ENCODE measurements at regions of chr16 and their contacts with region 1.

Region 1: DNA sequence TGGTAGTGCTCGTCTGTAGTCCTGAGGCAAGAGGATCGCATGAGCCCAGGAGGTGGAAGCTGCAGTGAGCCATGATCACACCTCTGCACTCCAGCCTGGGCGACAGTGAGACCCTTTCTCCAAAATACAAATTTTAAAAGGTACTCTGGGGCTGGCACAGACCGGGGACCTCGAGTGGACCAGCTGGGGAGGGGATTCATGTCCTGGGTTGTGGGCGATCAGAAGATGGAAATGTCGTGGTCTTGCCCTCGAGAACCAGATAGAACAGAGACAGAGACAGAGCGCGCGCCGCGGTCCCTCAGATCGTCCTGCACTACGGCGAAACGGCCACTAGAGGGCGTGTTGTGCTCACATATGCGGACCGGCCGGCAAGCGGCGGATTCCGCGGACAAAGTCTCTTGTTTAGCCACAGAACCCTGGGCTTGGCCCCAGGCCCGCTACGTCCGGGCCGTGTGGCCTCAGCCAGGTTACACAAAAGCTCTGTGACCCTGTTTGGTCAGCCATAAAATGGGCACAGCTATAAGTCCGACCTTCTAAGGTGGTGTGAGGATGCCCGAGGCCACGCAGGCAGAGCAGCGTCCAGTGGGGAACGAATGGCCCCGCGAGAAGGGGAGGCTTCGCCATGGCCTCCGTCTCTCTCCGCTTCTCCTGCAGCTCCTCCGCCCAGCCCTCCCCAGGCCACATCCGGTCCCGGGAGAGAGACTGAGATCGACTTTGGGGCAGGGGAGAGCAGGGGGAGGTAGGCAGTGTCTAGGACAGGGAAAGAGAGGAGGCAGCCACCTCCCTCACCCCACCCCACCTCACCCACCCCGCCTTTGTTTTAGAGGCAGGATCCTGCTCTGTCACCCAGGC is 14.6 kb upstream of the SBK1 start:
- DNase-seq: peak; percentile 85 to 96 (median 93)
- ATAC-seq: peak; percentile 89 to 93
- H3K4me3 ChIP-seq: peak overlapping the region; percentile 14
- H3K27ac ChIP-seq: no peak overlapping the region
- H3K4me1 ChIP-seq: no peaks in the 10 kb centered on the region
- H3K27me3 ChIP-seq: no peaks in the 10 kb centered on the region

Region 2: GRCh38 chr16:28317040-28317880 is 39.5 kb after region 1 on chr16:
- intact Hi-C with region 1: loop called in 2 of 4 experiments (anchors 1 to 5 kb)
- DNase-seq: peak; percentile 53 to 78 (median 72)
- ATAC-seq: peak; percentile 30 to 55
- H3K4me3 ChIP-seq: no peak overlapping the region
- H3K27ac ChIP-seq: no peak overlapping the region
- H3K4me1 ChIP-seq: no peaks in the 10 kb centered on the region
- H3K27me3 ChIP-seq: no peaks in the 10 kb centered on the region

Region 3: GRCh38 chr16:28473714-28474265 is 196.0 kb after region 1 on chr16:
- intact Hi-C with region 1: no loop called
- DNase-seq: no peak
- ATAC-seq: no peak
- H3K4me3 ChIP-seq: no peak overlapping the region
- H3K27ac ChIP-seq: no peak overlapping the region
- H3K4me1 ChIP-seq: no peaks in the 10 kb centered on the region
- H3K27me3 ChIP-seq: no peaks in the 10 kb centered on the region